Activated T-helper 1 cell treated with anti-CD3 and anti-CD28 coated beads, Interleukin-12 subunit alpha, Interleukin-12 subunit beta, Interleukin-2, Interleukin-4 antibody, amounts not matched to agents 30 ng/mL and 10 ng/mL and 1 ng/mL, durations not matched to agents 14 hours and 24 hours and 36 hours (primary cell): ENCODE measurements at regions of chr1 and their contacts with region 1.

Region 1: GRCh38 chr1:58816072-58816746 is 32.4 kb upstream of the JUN start:
- DNase-seq: peak; percentile 83
- H3K4me3 Mint-ChIP-seq: peak overlapping the region; percentile 83
- H3K27ac Mint-ChIP-seq: peak overlapping the region; percentile 86
- H3K4me1 Mint-ChIP-seq: peaks cover 56% of the 10 kb centered on the region
- H3K27me3 Mint-ChIP-seq: peaks cover 2% of the 10 kb centered on the region

Region 2: DNA sequence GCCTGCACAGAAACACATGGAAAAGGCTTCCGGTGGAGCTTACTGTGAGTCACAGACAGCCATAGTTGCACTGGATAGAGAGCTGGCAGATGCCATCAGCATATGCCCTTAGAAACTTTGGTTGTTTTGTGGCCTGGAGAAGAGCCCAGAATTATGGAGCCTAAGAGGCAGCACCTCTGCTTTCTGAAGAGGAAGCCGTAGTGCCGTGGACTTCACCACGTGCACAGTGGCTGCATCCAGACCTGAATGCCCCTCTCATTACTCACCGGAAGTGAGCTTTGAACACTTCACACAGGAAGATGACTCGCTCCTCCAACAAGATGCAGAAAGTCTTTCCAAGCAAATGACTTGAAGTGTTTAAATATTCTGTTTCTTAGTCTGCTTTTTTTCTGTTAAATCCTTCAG is 60.7 kb before region 1 on chr1:
- intact Hi-C with region 1: loop called (anchors 1 kb)
- DNase-seq: peak; percentile 48
- H3K4me3 Mint-ChIP-seq: peak overlapping the region; percentile 59
- H3K27ac Mint-ChIP-seq: peak overlapping the region; percentile 88
- H3K4me1 Mint-ChIP-seq: peaks cover 61% of the 10 kb centered on the region
- H3K27me3 Mint-ChIP-seq: no peaks in the 10 kb centered on the region

Region 3: GRCh38 chr1:58884706-58885661 is 68.8 kb after region 1 on chr1:
- intact Hi-C with region 1: loop called (anchors 1 kb)
- DNase-seq: peak; percentile 3
- H3K4me3 Mint-ChIP-seq: peak overlapping the region; percentile 65
- H3K27ac Mint-ChIP-seq: peak overlapping the region; percentile 78
- H3K4me1 Mint-ChIP-seq: peaks cover 70% of the 10 kb centered on the region
- H3K27me3 Mint-ChIP-seq: peaks cover 5% of the 10 kb centered on the region

Region 4: GRCh38 chr1:59025898-59026426 is 209.8 kb after region 1 on chr1:
- intact Hi-C with region 1: loop called (anchors 1 kb)
- DNase-seq: no peak
- H3K4me3 Mint-ChIP-seq: no peak overlapping the region
- H3K27ac Mint-ChIP-seq: no peak overlapping the region
- H3K4me1 Mint-ChIP-seq: peaks cover 17% of the 10 kb centered on the region
- H3K27me3 Mint-ChIP-seq: no peaks in the 10 kb centered on the region

Region 5: GRCh38 chr1:59143133-59143487 is 326.9 kb after region 1 on chr1:
- intact Hi-C with region 1: loop called (anchors 1 kb)
- DNase-seq: no peak
- H3K4me3 Mint-ChIP-seq: peak overlapping the region; percentile 8
- H3K27ac Mint-ChIP-seq: peak overlapping the region; percentile 62
- H3K4me1 Mint-ChIP-seq: peaks cover 86% of the 10 kb centered on the region
- H3K27me3 Mint-ChIP-seq: no peaks in the 10 kb centered on the region

Region 6: DNA sequence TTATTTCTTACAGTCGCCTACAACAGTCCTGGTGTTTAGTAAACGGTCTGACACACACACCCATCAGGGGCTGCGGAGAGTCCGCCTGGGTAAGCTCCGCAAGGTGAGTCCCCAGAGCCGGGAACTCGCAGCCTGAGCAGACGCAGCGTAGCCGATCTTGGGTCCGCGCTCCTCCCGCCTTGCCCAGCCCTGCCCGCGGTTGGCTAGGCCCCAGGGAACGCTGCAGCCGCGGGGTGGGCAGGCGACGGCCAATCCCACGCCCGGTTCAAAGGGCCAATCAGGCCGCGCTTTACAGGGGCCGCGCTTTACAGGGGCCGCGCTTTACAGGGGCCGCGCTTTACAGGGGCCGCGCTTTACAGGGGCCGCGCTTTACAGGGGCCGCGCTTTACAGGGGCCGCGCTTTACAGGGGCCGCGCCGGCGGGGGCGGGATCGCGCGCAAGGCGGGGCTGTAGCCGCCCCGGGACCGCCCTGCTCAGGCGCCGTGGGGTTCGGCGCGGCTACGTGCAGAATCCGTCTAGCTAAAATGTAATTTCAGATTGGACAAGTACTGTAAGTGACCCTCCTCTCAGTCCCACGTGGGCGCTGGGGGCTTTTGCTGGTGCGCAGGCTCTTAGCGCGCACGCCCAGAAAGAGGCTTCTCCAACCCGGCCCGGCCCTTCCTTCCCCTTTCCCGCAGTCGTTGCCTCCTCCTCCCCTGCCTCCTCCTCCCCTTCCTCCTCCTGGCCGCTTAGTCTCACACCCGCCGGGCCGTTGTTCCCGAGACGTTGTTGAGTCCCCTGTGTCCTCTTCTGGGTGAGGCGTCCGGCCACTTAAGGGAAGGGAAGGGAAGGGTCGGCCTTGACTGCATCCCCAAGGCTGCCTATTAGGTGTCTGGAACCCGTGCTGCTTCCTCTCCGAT is 480.4 kb after region 1 on chr1 and contains the start of gene FGGY:
- intact Hi-C with region 1: loop called (anchors 1 kb)
- DNase-seq: peak; percentile 86
- H3K4me3 Mint-ChIP-seq: peak within 1 kb of the TSS; percentile 91
- H3K27ac Mint-ChIP-seq: peak within 1 kb of the TSS; percentile 91
- H3K4me1 Mint-ChIP-seq: peaks cover 48% of the 10 kb centered on the region
- H3K27me3 Mint-ChIP-seq: no peaks in the 10 kb centered on the region
- total RNA-seq, gene FGGY: 7.1 and 8.2 TPM in 2 replicates